T-cell (primary cell): ENCODE measurements at regions of chr2 and their contacts with region 1.

Region 1: GRCh38 chr2:81858998-81859397 is 1554.4 kb upstream of the LRRTM1 start:
- DNase-seq: no peak
- ATAC-seq: no peak
- H3K4me3 ChIP-seq: no peak overlapping the region
- H3K4me3 Mint-ChIP-seq: no peak overlapping the region
- H3K27ac ChIP-seq: no peak overlapping the region
- H3K27ac Mint-ChIP-seq: no peak overlapping the region
- H3K4me1 ChIP-seq: no peaks in the 10 kb centered on the region
- H3K4me1 Mint-ChIP-seq: no peaks in the 10 kb centered on the region
- H3K27me3 ChIP-seq: no peaks in the 10 kb centered on the region
- H3K27me3 Mint-ChIP-seq: no peaks in the 10 kb centered on the region

Region 2: DNA sequence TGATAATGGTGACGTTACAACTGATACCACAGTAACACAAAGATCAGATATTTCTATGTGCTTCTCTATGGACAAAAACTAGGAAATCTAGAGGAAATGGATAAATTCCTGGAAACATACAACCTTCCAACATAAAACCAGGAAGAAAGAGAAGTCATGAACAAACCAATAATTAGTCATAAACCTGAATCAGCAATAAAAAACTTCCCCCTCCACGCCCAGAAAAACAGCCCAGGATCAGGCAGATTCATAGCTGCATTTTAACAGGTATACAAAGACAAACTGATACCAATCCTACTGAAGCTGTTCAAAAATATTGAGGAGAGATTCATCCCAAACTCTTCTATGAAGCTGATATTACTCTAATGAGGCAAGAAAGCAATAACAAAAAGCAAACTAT is 19.2 kb before region 1 on chr2:
- CTCF ChIA-PET with region 1: no interaction called
- POLR2A ChIA-PET with region 1: no interaction called
- DNase-seq: no peak
- ATAC-seq: no peak
- H3K4me3 ChIP-seq: no peak overlapping the region
- H3K4me3 Mint-ChIP-seq: no peak overlapping the region
- H3K27ac ChIP-seq: no peak overlapping the region
- H3K27ac Mint-ChIP-seq: no peak overlapping the region
- H3K4me1 ChIP-seq: no peaks in the 10 kb centered on the region
- H3K4me1 Mint-ChIP-seq: no peaks in the 10 kb centered on the region
- H3K27me3 ChIP-seq: no peaks in the 10 kb centered on the region
- H3K27me3 Mint-ChIP-seq: no peaks in the 10 kb centered on the region

Region 3: GRCh38 chr2:81870119-81870518 is 11.1 kb after region 1 on chr2:
- CTCF ChIA-PET with region 1: no interaction called
- POLR2A ChIA-PET with region 1: interaction called in 1 of 2 experiments, 12 read pairs
- DNase-seq: no peak
- ATAC-seq: no peak
- H3K4me3 ChIP-seq: no peak overlapping the region
- H3K4me3 Mint-ChIP-seq: no peak overlapping the region
- H3K27ac ChIP-seq: no peak overlapping the region
- H3K27ac Mint-ChIP-seq: no peak overlapping the region
- H3K4me1 ChIP-seq: no peaks in the 10 kb centered on the region
- H3K4me1 Mint-ChIP-seq: no peaks in the 10 kb centered on the region
- H3K27me3 ChIP-seq: no peaks in the 10 kb centered on the region
- H3K27me3 Mint-ChIP-seq: no peaks in the 10 kb centered on the region